Activated T-helper 1 cell treated with anti-CD3 and anti-CD28 coated beads, Interleukin-12 subunit alpha, Interleukin-12 subunit beta, Interleukin-2, Interleukin-4 antibody, amounts not matched to agents 30 ng/mL and 10 ng/mL and 1 ng/mL, durations not matched to agents 14 hours and 24 hours and 36 hours (primary cell): ENCODE measurements at regions of chr7 and their contacts with region 1.

Region 1: GRCh38 chr7:155644178-155644970 is at the start of gene RBM33:
- DNase-seq: peak; percentile 78
- H3K4me3 Mint-ChIP-seq: peak within 1 kb of the TSS; percentile 99
- H3K27ac Mint-ChIP-seq: peak within 1 kb of the TSS; percentile 99
- H3K4me1 Mint-ChIP-seq: peaks cover 41% of the 10 kb centered on the region
- H3K27me3 Mint-ChIP-seq: no peaks in the 10 kb centered on the region
- total RNA-seq, gene RBM33: 75.2 and 78.9 TPM in 2 replicates

Region 2: GRCh38 chr7:155003376-155004214 is 640.8 kb before region 1 on chr7:
- intact Hi-C with region 1: loop called (anchors 5 kb)
- DNase-seq: peak; percentile 78
- H3K4me3 Mint-ChIP-seq: peak overlapping the region; percentile 95
- H3K27ac Mint-ChIP-seq: peak overlapping the region; percentile 94
- H3K4me1 Mint-ChIP-seq: peaks cover 6% of the 10 kb centered on the region
- H3K27me3 Mint-ChIP-seq: peaks cover 1% of the 10 kb centered on the region

Region 3: GRCh38 chr7:155598810-155599210 is 45.6 kb before region 1 on chr7:
- intact Hi-C with region 1: loop called (anchors 1 kb)
- DNase-seq: peak; percentile 69
- H3K4me3 Mint-ChIP-seq: no peak overlapping the region
- H3K27ac Mint-ChIP-seq: no peak overlapping the region
- H3K4me1 Mint-ChIP-seq: peaks cover 10% of the 10 kb centered on the region
- H3K27me3 Mint-ChIP-seq: peaks cover 29% of the 10 kb centered on the region

Region 4: DNA sequence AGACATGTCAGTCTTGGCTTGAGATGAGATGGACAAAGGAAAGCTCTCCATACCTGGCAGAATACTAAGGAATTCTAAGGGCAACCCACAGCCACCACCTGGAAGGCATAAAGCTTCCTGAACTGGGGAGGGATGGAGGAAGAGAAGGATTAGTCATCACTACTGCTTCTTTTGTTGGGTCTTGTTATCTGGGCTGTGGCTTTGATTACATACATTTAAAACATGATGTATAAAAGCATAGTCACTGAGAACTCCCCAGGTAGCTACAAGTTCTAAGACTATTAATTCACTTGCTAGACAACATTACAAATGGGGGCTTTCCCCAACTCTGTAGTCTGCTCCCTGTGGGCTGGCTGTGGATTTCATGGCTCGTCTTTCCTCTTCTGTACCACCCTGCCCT is 58.2 kb after region 1 on chr7:
- intact Hi-C with region 1: loop called (anchors 5 kb)
- DNase-seq: no peak
- H3K4me3 Mint-ChIP-seq: no peak overlapping the region
- H3K27ac Mint-ChIP-seq: no peak overlapping the region
- H3K4me1 Mint-ChIP-seq: peaks cover 23% of the 10 kb centered on the region
- H3K27me3 Mint-ChIP-seq: no peaks in the 10 kb centered on the region

Region 5: DNA sequence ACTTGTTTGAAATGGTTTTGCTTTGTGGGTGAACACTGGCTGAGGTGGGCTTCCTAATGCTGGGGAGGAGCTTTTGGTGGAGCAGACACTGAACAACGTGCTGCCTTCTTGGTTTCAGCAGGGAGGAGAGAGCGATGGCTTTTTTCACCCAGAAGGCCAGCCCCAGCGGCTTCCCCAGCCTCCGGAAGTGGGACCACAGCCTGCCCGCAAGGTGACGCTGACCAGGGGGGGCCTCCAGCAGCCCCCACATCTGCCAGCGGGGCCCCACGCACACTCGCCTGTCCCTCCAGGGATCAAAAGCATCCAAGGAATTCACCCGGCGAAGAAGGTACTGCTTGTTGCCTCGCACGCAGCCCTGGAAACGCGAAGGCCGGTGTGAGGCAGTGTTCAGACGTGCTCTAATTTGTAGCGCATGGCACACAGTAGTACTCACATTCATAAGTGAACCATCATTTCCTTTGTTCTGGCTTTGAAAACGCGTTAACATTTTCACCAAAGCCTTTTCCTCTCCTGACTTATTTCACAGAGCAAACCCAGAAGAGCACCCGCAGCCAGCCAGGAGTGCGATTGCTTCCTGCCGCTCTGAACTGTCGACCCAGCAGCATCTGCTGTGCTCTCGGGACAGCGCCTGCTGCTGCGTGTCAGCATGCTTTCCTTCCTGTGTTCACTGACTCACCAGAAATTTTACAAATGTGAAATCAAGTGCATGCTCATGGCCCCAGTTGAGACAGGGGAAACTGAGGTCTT is 119.5 kb after region 1 on chr7:
- intact Hi-C with region 1: loop called (anchors 1 kb)
- DNase-seq: peak; percentile 65
- H3K4me3 Mint-ChIP-seq: peak overlapping the region; percentile 85
- H3K27ac Mint-ChIP-seq: peak overlapping the region; percentile 100
- H3K4me1 Mint-ChIP-seq: peaks cover 66% of the 10 kb centered on the region
- H3K27me3 Mint-ChIP-seq: no peaks in the 10 kb centered on the region

Region 6: GRCh38 chr7:156892821-156893706 is 1248.7 kb after region 1 on chr7 and contains the start of gene LMBR1:
- intact Hi-C with region 1: loop called (anchors 1 kb)
- DNase-seq: peak; percentile 92
- H3K4me3 Mint-ChIP-seq: peak within 1 kb of the TSS; percentile 95
- H3K27ac Mint-ChIP-seq: peak within 1 kb of the TSS; percentile 93
- H3K4me1 Mint-ChIP-seq: peaks cover 43% of the 10 kb centered on the region
- H3K27me3 Mint-ChIP-seq: no peaks in the 10 kb centered on the region
- total RNA-seq, gene LMBR1: 53.5 and 55.5 TPM in 2 replicates

Region 7: DNA sequence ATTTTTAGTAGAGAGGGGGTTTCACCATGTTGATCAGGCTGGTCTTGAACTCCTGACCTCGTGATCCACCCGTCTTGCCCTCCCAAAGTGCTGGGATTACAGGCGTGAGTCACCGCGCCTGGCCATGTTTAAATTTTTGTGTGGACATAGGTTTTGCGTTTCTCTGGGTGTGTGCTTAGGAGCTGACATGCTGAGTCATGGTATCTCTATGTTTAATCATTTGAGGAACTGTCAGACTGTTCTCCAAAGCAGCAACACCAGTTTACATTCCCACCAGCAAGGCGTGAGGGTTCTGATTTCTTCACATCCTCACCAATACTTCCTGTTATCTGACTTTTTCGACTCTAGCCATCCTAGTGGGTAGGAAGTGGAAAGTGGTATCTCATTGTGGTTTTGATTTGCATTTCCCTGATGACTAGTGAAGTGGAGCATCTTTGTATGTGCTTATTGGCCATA is 1846.1 kb after region 1 on chr7:
- intact Hi-C with region 1: loop called (anchors 10 kb)
- DNase-seq: peak; percentile 67
- H3K4me3 Mint-ChIP-seq: no peak overlapping the region
- H3K27ac Mint-ChIP-seq: peak overlapping the region; percentile 69
- H3K4me1 Mint-ChIP-seq: peaks cover 55% of the 10 kb centered on the region
- H3K27me3 Mint-ChIP-seq: peaks cover 16% of the 10 kb centered on the region